ENCODE measurements at regions of chr20 and their contacts with region 1.

Region 1: GRCh38 chr20:18287915-18288748 is at the start of gene ZNF133:
- DNase-seq: peak; percentile 96 to 100 (median 98)
- ATAC-seq: peak; percentile 96
- H3K4me3 ChIP-seq: peak within 1 kb of the TSS; percentile 91
- H3K4me3 Mint-ChIP-seq: peak within 1 kb of the TSS; percentile 93 to 99 (median 98)
- H3K27ac ChIP-seq: peak within 1 kb of the TSS; percentile 96
- H3K27ac Mint-ChIP-seq: peak within 1 kb of the TSS; percentile 98 to 100 (median 99)
- H3K4me1 ChIP-seq: peaks cover 4 to 10% of the 10 kb centered on the region in 2 donors
- H3K4me1 Mint-ChIP-seq: peaks cover 16 to 51% (median 35%) of the 10 kb centered on the region in 7 donors
- H3K27me3 ChIP-seq: peaks cover 0 to 7% of the 10 kb centered on the region in 2 donors
- H3K27me3 Mint-ChIP-seq: peaks cover 14 to 30% (median 20%) of the 10 kb centered on the region in 5 donors
- total RNA-seq, gene ZNF133: 6.5 to 11.5 (median 9.4) TPM

Region 2: DNA sequence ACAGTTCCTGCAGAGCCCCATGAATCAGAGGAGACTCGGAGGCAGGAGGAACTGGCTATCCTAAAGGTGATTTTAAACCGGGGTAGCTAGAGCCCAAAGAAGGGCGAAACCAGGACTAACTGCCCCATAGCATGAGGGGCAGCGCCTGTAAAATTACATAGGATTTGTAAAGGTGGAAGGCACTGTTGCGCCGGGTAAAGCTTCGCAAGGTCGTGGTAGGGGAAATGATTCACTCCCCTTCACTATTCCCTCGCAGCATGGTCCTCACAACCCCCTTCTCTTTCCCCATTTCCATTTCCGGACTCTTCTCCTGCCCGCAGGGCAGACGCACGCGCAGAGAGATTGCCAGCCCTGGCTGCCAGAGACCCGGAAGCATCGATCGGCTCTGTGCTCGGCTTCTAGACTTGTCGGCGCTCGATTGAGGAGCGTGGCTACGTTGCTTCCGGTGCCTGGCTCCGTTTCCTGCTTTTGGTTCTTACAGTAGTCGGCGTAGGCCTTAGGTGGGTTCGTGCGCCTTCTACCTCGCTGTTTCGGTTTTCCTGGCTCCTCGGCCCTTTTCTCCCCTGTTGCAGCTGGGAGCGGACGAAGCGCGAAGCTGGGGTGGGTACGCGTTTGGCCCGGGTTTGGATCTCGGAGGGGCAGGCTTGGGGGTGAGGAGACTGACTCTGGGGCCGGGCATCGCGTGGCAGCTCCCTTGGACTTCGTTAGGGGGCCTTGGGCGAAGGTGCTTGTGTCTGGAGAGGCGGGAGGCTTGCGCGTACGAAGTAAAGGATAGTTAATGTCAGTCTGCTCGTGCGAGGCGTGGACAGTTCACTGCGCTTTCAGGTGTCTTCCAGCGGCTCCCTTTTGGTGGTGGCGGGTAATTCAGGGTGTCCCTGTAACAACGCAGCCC is 1558.3 kb before region 1 on chr20 and contains the start of gene SNRPB2:
- CTCF ChIA-PET with region 1: no interaction called
- POLR2A ChIA-PET with region 1: interaction called, 4 read pairs
- intact Hi-C with region 1: loop called in 1 of 2 experiments (anchors 2 kb)
- DNase-seq: peak; percentile 75 to 94 (median 90)
- ATAC-seq: peak; percentile 98
- H3K4me3 ChIP-seq: peak within 1 kb of the TSS; percentile 93
- H3K4me3 Mint-ChIP-seq: peak within 1 kb of the TSS; percentile 87 to 100 (median 99)
- H3K27ac ChIP-seq: peak within 1 kb of the TSS; percentile 94
- H3K27ac Mint-ChIP-seq: peak within 1 kb of the TSS; percentile 98 to 100 (median 100)
- H3K4me1 ChIP-seq: peaks cover 30 to 40% of the 10 kb centered on the region in 2 donors
- H3K4me1 Mint-ChIP-seq: peaks cover 32 to 60% (median 56%) of the 10 kb centered on the region in 7 donors
- H3K27me3 ChIP-seq: no peaks in the 10 kb centered on the region
- H3K27me3 Mint-ChIP-seq: peaks cover 9 to 25% (median 15%) of the 10 kb centered on the region in 5 donors
- total RNA-seq, gene SNRPB2: 30.8 to 97.0 (median 40.0) TPM

Region 3: GRCh38 chr20:17569616-17570346 is 718.4 kb before region 1 on chr20 and contains the start of gene DSTN:
- CTCF ChIA-PET with region 1: no interaction called
- POLR2A ChIA-PET with region 1: interaction called, 3 read pairs
- intact Hi-C with region 1: loop called in 1 of 2 experiments (anchors 1 kb)
- DNase-seq: peak; percentile 83 to 91 (median 89)
- ATAC-seq: peak; percentile 95
- H3K4me3 ChIP-seq: peak within 1 kb of the TSS; percentile 94
- H3K4me3 Mint-ChIP-seq: peak within 1 kb of the TSS; percentile 82 to 97 (median 95)
- H3K27ac ChIP-seq: peak within 1 kb of the TSS; percentile 85
- H3K27ac Mint-ChIP-seq: peak within 1 kb of the TSS; percentile 80 to 96 (median 91)
- H3K4me1 ChIP-seq: peaks cover 5 to 11% of the 10 kb centered on the region in 2 donors
- H3K4me1 Mint-ChIP-seq: peaks cover 17 to 44% (median 31%) of the 10 kb centered on the region in 7 donors
- H3K27me3 ChIP-seq: no peaks in the 10 kb centered on the region
- H3K27me3 Mint-ChIP-seq: peaks cover 0 to 14% (median 0%) of the 10 kb centered on the region in 5 donors
- total RNA-seq, gene DSTN: 28.7 to 63.6 (median 33.9) TPM

Region 4: DNA sequence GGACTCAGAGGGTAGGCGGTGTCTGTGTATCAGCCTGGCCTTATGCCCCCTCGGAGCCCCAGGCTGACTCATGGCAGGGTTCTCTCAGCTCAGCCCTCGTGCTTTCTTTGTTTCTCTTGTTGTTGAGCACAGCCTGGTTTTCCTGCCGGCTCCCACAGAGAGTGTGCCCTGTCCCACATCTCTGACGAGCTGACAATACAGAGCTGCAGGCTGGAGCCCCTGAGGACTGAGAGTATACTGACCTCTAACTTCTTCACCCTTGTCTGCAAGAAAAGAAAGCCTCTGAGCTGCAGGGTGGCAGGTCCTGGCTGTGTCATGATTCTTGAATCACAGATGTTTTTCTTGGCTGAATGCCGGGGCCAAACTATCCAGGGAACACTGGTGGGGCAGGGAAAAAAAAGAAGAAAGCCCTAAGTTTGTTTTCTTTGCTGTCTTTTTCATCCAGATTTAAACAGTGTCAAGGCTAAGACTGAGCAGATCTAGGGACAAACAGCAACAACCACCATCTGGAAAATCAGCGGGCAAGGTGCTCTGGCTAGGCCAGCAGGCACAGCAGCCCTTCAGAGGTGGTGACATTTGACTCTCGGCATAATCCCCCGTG is 63.1 kb before region 1 on chr20:
- CTCF ChIA-PET with region 1: no interaction called
- POLR2A ChIA-PET with region 1: no interaction called
- intact Hi-C with region 1: no loop called
- DNase-seq: no peak
- ATAC-seq: no peak
- H3K4me3 ChIP-seq: no peak overlapping the region
- H3K4me3 Mint-ChIP-seq: no peak overlapping the region
- H3K27ac ChIP-seq: no peak overlapping the region
- H3K27ac Mint-ChIP-seq: no peak overlapping the region
- H3K4me1 ChIP-seq: no peaks in the 10 kb centered on the region
- H3K4me1 Mint-ChIP-seq: no peaks in the 10 kb centered on the region
- H3K27me3 ChIP-seq: peaks cover 0 to 4% of the 10 kb centered on the region in 2 donors
- H3K27me3 Mint-ChIP-seq: peaks cover 10 to 36% (median 17%) of the 10 kb centered on the region in 5 donors

Region 5: DNA sequence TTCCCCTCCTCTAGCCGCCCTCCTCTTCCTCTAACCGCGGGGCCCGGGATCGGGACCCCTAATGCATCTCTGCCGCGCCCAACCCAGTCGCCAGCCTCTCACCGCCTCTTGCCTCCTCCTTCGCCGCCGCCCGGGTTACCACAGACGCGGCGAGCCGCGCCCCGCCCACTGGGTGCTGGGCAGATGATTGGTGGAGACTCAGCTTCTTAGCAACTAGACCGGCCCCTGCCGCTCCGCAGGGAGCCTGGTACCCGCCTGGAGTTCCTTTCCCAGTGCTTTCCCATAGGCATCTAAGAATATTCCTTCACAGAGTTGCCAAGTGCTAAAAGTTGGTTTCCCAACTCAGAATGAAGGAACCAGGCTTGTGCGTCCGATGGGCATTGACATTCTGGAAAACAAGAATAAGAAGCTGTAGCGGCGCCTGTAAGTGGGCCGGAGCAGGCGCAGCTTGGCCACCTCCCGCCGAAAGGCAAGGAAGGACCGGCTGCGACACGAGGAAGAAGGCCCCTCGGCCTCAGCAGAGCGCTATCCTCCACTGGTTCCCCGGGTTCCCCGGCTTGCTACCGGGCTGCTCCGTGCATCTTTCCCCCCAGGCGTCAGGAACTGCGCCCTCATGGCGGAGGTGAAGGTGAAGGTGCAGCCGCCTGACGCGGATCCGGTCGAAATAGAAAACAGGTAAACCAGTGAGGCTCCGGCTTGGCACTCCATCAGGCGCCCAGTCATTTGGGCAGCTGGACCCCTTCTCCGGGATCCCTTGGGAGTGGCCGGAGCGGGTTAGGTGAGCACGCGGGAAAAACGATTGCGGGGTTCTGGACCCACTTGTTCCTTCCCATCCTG is 179.0 kb after region 1 on chr20 and contains the starts of genes DZANK1 and POLR3F:
- CTCF ChIA-PET with region 1: no interaction called
- POLR2A ChIA-PET with region 1: interaction called, 12 read pairs
- intact Hi-C with region 1: loop called (anchors 1 kb)
- DNase-seq: peak; percentile 85 to 93 (median 92)
- ATAC-seq: peak; percentile 97
- H3K4me3 ChIP-seq: peak within 1 kb of the TSS; percentile 93
- H3K4me3 Mint-ChIP-seq: peak within 1 kb of the TSS; percentile 89 to 99 (median 97)
- H3K27ac ChIP-seq: peak within 1 kb of the TSS; percentile 77
- H3K27ac Mint-ChIP-seq: peak within 1 kb of the TSS; percentile 93 to 99 (median 98)
- H3K4me1 ChIP-seq: peaks cover 7 to 14% of the 10 kb centered on the region in 2 donors
- H3K4me1 Mint-ChIP-seq: peaks cover 25 to 44% (median 37%) of the 10 kb centered on the region in 7 donors
- H3K27me3 ChIP-seq: no peaks in the 10 kb centered on the region
- H3K27me3 Mint-ChIP-seq: no peaks in the 10 kb centered on the region
- total RNA-seq, gene DZANK1: 1.2 to 3.5 (median 2.9) TPM
- total RNA-seq, gene POLR3F: 5.0 to 13.5 (median 11.5) TPM

Region 6: GRCh38 chr20:18566892-18567742 is 279.0 kb after region 1 on chr20 and contains the start of gene SMIM26:
- CTCF ChIA-PET with region 1: no interaction called
- POLR2A ChIA-PET with region 1: interaction called, 3 read pairs
- intact Hi-C with region 1: loop called (anchors 1 kb)
- DNase-seq: peak; percentile 85 to 94 (median 92)
- ATAC-seq: peak; percentile 99
- H3K4me3 ChIP-seq: peak within 1 kb of the TSS; percentile 76
- H3K4me3 Mint-ChIP-seq: peak within 1 kb of the TSS; percentile 93 to 99 (median 96)
- H3K27ac ChIP-seq: peak within 1 kb of the TSS; percentile 95
- H3K27ac Mint-ChIP-seq: peak within 1 kb of the TSS; percentile 92 to 100 (median 99)
- H3K4me1 ChIP-seq: peaks cover 4 to 15% of the 10 kb centered on the region in 2 donors
- H3K4me1 Mint-ChIP-seq: peaks cover 14 to 25% (median 22%) of the 10 kb centered on the region in 7 donors
- H3K27me3 ChIP-seq: no peaks in the 10 kb centered on the region
- H3K27me3 Mint-ChIP-seq: no peaks in the 10 kb centered on the region
- total RNA-seq, gene SMIM26: 51.2 to 78.4 (median 69.5) TPM

Region 7: DNA sequence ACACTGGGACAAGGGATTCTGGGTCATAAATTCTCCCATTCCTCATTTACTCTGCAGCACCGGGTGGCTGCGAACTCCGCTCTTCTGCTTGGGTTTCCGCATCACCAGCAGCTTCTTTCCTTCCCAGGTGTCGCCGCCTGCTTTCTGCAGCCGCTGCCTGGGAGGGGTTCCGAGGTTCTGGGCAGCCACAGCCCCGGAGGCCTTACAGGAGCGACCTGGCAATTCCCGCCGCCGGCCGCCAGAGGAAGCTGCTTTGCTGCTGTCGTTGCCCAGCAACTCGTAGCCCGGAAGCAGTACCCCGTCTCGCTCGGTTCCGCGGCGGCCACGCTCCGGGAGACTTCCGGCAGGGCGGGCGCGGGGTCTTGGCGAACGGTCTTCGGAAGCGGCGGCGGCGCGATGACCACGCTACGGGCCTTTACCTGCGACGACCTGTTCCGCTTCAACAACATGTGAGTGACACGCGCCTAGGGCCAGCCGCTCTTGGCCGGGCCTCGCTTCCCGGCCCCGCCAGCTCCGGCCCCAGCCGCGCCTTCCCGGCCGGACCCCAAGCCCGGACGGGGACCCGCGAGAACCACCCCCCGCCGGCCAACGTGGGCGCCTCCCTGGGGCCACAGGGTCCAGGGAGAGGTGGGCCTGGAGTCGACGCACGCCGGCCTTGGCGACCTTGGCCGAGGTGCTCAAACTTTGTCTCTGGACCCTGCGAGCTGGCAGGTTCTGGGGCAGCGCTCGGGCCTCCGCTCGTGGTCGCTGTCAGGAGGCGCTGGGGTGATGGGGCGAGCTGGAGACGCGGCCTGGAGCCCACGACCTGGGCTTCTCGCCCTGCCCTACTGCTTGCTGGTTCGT is 1729.1 kb after region 1 on chr20 and contains the start of gene NAA20:
- CTCF ChIA-PET with region 1: no interaction called
- POLR2A ChIA-PET with region 1: no interaction called
- intact Hi-C with region 1: loop called in 1 of 2 experiments (anchors 5 kb)
- DNase-seq: peak; percentile 80 to 89 (median 87)
- ATAC-seq: peak; percentile 99
- H3K4me3 ChIP-seq: peak within 1 kb of the TSS; percentile 77
- H3K4me3 Mint-ChIP-seq: peak within 1 kb of the TSS; percentile 88 to 96 (median 93)
- H3K27ac ChIP-seq: peak within 1 kb of the TSS; percentile 83
- H3K27ac Mint-ChIP-seq: peak within 1 kb of the TSS; percentile 90 to 96 (median 94)
- H3K4me1 ChIP-seq: peaks cover 9 to 28% of the 10 kb centered on the region in 2 donors
- H3K4me1 Mint-ChIP-seq: peaks cover 38 to 68% (median 63%) of the 10 kb centered on the region in 7 donors
- H3K27me3 ChIP-seq: no peaks in the 10 kb centered on the region
- H3K27me3 Mint-ChIP-seq: no peaks in the 10 kb centered on the region
- total RNA-seq, gene NAA20: 21.5 to 52.6 (median 28.3) TPM

Measured in naive thymus-derived CD4-positive, alpha-beta T cell (primary cell).